ENCODE measurements at regions of chr11 and their contacts with region 1.

Region 1: DNA sequence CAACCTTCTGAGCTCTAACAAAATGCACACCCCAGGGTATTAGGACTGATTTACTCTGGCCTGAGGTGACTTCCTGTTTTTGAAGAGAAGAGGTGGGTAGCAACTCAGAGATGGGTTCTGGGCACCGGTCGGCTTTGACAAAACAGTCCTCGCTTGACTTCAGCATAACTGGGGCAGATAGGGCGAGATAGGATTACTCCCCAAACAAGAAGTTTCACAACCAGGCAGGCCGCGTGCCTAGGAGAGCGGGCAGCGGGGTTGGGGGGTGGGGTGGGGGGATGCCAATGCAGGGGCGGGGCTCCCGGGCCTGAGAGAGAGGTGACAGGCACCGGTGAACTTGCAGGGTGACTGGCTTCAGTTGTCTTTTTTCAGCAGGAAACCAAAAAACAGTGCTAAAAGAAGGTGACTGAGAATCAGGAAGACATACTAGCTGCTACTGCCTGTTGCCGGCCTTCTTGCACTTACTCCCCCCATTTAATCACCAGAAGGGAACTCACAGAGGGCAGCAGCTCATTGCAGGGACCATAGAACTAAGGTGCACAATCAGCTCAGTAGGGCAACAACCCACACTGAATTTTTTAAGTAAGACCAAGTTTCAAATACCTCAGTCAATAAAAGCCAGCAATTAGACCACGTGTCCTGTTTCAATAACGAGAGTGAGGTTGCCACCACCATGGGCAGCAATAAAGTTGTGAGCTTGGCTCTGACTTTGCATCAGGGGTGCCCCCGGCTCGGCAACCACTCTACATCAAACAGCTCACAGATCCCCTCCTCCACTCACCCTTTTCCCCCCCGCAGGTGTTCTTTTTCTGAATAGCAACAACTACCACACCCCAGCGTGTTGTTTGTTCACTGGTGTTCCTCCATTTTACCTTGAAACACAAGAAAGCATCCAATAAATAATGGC is 37.2 kb upstream of the ETS1 start:
- DNase-seq: peak; percentile 46
- H3K4me3 Mint-ChIP-seq: peak overlapping the region; percentile 53
- H3K27ac Mint-ChIP-seq: peak overlapping the region; percentile 95
- H3K4me1 Mint-ChIP-seq: peaks cover 77% of the 10 kb centered on the region
- H3K27me3 Mint-ChIP-seq: no peaks in the 10 kb centered on the region

Region 2: DNA sequence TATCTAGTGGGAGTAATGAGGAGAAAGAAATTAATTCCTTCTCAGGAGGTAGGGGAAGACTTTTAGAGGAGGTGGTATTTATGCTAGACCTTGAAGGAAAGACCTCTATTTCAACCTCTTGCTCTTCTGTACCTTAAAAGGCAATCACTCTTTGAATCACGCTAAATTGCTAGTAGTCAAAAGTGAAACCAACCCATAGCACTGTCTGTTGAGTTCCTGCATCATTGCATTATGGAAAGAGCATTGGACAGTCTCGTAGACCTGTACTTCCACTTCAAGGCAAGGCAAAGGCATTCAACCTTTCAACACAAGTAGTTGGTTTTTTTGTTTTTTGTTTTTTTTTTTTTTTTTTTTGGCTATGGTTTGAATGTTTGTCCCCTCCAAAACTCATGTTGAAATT is 807.6 kb before region 1 on chr11:
- intact Hi-C with region 1: no loop called
- DNase-seq: no peak
- H3K4me3 Mint-ChIP-seq: no peak overlapping the region
- H3K27ac Mint-ChIP-seq: no peak overlapping the region
- H3K4me1 Mint-ChIP-seq: no peaks in the 10 kb centered on the region
- H3K27me3 Mint-ChIP-seq: no peaks in the 10 kb centered on the region

Region 3: GRCh38 chr11:128323381-128323780 is 301.1 kb before region 1 on chr11:
- intact Hi-C with region 1: loop called (anchors 10 kb)
- DNase-seq: peak; percentile 44
- H3K4me3 Mint-ChIP-seq: peak overlapping the region; percentile 62
- H3K27ac Mint-ChIP-seq: peak overlapping the region; percentile 94
- H3K4me1 Mint-ChIP-seq: peaks cover 81% of the 10 kb centered on the region
- H3K27me3 Mint-ChIP-seq: no peaks in the 10 kb centered on the region

Region 4: DNA sequence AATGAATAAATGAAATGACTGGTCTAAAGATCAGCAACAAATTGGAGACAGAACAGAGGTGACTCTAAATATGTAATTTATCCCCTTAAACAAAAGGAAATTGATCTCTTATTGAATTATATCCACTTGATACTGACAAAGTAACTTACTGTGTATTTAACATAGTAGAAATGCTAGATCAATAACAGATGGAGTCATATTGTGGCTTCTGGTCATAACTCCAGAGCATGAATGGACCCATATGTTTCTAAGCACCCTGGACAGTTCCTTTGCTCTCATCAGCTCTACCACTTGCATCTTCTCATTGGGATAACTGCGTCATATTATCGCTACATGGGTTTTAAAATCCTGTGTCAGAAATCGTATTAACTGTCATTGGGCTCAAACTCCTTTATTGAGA is 259.5 kb before region 1 on chr11:
- intact Hi-C with region 1: no loop called
- DNase-seq: no peak
- H3K4me3 Mint-ChIP-seq: no peak overlapping the region
- H3K27ac Mint-ChIP-seq: no peak overlapping the region
- H3K4me1 Mint-ChIP-seq: peaks cover 2% of the 10 kb centered on the region
- H3K27me3 Mint-ChIP-seq: peaks cover 7% of the 10 kb centered on the region

Region 5: GRCh38 chr11:128551611-128552335 is 72.7 kb before region 1 on chr11:
- intact Hi-C with region 1: loop called (anchors 1 kb)
- DNase-seq: no peak
- H3K4me3 Mint-ChIP-seq: no peak overlapping the region
- H3K27ac Mint-ChIP-seq: peak overlapping the region; percentile 73
- H3K4me1 Mint-ChIP-seq: peaks cover 42% of the 10 kb centered on the region
- H3K27me3 Mint-ChIP-seq: no peaks in the 10 kb centered on the region

Region 6: DNA sequence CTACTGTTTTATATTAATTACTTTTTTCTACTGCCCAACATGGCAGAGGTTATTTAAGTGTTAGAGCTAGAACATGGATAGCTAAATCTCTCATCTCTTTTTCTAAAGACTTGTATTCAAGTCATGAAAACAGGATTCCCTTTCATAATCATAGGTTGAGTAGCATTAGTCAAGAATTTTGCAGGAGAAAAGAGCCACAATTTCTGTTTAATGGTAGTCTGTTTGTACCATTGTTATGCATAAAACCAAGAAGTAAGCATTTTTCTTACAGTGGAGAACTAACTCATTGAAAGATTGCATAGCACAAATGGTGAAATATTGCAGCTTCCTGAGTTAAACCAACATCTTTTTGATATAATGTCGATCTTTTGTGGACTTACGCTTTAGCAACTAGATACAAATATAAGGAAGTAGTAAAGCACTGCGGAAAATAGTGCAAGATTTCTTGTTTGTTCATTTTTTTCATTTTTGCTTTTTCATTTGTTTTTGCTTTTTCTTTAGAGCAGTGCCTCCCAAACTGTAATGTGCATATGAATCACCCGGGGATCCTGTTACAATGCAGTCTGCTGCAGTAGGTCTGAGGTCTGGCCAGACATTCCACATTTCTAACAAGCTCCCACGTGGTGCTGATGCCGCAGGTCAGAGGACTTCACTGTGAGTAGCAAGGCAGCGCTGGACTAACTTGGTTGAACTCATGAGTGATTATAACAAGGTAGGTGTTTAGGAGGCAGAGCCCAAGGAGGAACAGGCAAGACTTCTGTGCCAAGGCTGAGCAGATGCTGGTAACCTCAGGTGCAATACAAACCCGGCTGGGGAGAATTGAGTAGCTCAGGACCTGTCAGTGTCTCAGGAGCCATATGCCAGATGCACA is 41.8 kb before region 1 on chr11:
- intact Hi-C with region 1: loop called (anchors 1 kb)
- DNase-seq: no peak
- H3K4me3 Mint-ChIP-seq: no peak overlapping the region
- H3K27ac Mint-ChIP-seq: no peak overlapping the region
- H3K4me1 Mint-ChIP-seq: peaks cover 26% of the 10 kb centered on the region
- H3K27me3 Mint-ChIP-seq: peaks cover 15% of the 10 kb centered on the region

Region 7: DNA sequence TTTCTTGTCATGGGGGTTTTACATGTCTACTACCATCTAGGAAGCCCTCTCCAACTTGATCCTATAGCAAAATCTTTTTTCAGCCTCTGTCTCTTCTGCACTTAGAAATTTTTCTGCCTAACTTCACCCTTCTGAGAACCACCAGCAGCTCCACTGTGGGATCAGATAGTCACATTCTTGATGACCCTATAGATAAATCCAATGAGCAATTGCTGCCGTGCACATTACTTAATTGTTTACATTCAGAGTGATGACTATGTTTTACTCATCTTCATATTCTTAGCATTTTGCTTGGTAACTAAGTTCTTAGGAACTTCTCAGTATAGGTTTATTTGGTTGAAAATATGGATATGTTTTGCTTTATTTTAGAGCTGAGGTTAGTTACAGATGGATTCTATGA is 24.8 kb before region 1 on chr11:
- intact Hi-C with region 1: loop called (anchors 2 kb)
- DNase-seq: no peak
- H3K4me3 Mint-ChIP-seq: no peak overlapping the region
- H3K27ac Mint-ChIP-seq: peak overlapping the region; percentile 62
- H3K4me1 Mint-ChIP-seq: peaks cover 36% of the 10 kb centered on the region
- H3K27me3 Mint-ChIP-seq: peaks cover 2% of the 10 kb centered on the region

Region 8: GRCh38 chr11:128733440-128734102 is 109.0 kb after region 1 on chr11:
- intact Hi-C with region 1: loop called (anchors 5 kb)
- DNase-seq: no peak
- H3K4me3 Mint-ChIP-seq: peak overlapping the region; percentile 72
- H3K27ac Mint-ChIP-seq: peak overlapping the region; percentile 90
- H3K4me1 Mint-ChIP-seq: peaks cover 87% of the 10 kb centered on the region
- H3K27me3 Mint-ChIP-seq: no peaks in the 10 kb centered on the region